ENCODE measurements at regions of chr9 and their contacts with region 1.

Region 1: DNA sequence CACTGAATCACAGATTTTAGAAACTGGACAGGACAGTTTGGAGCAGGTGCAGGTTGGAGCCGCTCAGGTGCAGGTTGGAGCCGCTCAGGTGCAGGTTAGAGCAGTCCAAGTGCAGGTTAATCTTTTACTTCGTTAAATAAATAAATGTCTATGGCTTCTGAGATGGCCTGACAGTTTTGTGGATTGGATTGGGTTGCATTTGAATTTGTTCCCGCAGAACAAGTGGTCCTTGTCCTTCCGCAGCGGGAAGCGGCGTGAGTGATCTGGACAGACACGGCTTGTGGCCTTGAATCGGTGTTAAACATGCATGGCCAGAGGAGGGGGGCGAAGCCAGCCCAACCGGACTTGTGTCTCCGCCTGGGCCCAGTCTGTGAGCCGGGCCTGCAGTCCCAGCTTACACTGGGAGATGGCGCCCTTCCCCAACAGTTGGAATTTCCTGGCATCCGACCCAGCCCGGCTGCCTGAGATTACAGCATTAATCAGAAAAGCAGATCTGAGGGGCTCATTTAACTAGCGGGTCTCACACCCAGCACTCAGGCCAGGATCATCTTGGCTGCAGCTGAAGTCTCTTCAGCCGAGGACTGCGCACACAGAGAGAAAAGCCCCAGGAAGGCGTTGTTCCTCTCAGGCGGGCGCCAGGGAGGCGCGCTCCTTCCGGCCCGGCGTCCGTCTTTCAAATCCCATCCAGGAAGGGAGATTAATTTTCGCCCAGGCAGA is 1.5 kb upstream of the OLFM1 start:
- DNase-seq: peak; percentile 67 to 81
- H3K4me3 ChIP-seq: peak overlapping the region in 1 of 2 donors; percentile 14
- H3K27ac ChIP-seq: peak overlapping the region; percentile 22 to 45
- H3K4me1 ChIP-seq: peaks cover 0 to 13% of the 10 kb centered on the region in 2 donors
- H3K27me3 ChIP-seq: peaks cover 0 to 13% of the 10 kb centered on the region in 2 donors
- CTCF ChIP-seq: peak; percentile 80 to 98 (median 94)
- POLR2A ChIP-seq: no peak

Region 2: GRCh38 chr9:135343837-135344522 is 258.0 kb after region 1 on chr9:
- intact Hi-C with region 1: loop called (anchors 10 kb)
- DNase-seq: peak; percentile 25 to 27
- H3K4me3 ChIP-seq: no peak overlapping the region
- H3K27ac ChIP-seq: no peak overlapping the region
- H3K4me1 ChIP-seq: no peaks in the 10 kb centered on the region
- H3K27me3 ChIP-seq: no peaks in the 10 kb centered on the region
- CTCF ChIP-seq: peak; percentile 47 to 80 (median 71)
- POLR2A ChIP-seq: no peak

Region 3: GRCh38 chr9:135413459-135413858 is 327.5 kb after region 1 on chr9:
- intact Hi-C with region 1: loop called (anchors 2 kb)
- DNase-seq: no peak
- H3K4me3 ChIP-seq: no peak overlapping the region
- H3K27ac ChIP-seq: no peak overlapping the region
- H3K4me1 ChIP-seq: no peaks in the 10 kb centered on the region
- H3K27me3 ChIP-seq: no peaks in the 10 kb centered on the region
- CTCF ChIP-seq: no peak
- POLR2A ChIP-seq: no peak

Measured in uterus (tissue), 4 donors.